ENCODE measurements at regions of chr3 and their contacts with region 1.

Region 1: GRCh38 chr3:73848173-73848906 is 223.6 kb upstream of the PDZRN3 start:
- DNase-seq: no peak
- ATAC-seq: peak in 3 of 4 donors; percentile 46 to 81 (median 62)
- H3K4me3 ChIP-seq: no peak overlapping the region
- H3K27ac ChIP-seq: no peak overlapping the region
- H3K4me1 ChIP-seq: no peaks in the 10 kb centered on the region
- H3K27me3 ChIP-seq: no peaks in the 10 kb centered on the region
- CTCF ChIP-seq: peak; percentile 79

Region 2: GRCh38 chr3:73459711-73460110 is 388.6 kb before region 1 on chr3:
- intact Hi-C with region 1: loop called in 1 of 2 experiments (anchors 5 kb)
- DNase-seq: no peak
- ATAC-seq: no peak
- H3K4me3 ChIP-seq: no peak overlapping the region
- H3K27ac ChIP-seq: no peak overlapping the region
- H3K4me1 ChIP-seq: peaks cover 8% of the 10 kb centered on the region
- H3K27me3 ChIP-seq: no peaks in the 10 kb centered on the region
- CTCF ChIP-seq: no peak

Region 3: DNA sequence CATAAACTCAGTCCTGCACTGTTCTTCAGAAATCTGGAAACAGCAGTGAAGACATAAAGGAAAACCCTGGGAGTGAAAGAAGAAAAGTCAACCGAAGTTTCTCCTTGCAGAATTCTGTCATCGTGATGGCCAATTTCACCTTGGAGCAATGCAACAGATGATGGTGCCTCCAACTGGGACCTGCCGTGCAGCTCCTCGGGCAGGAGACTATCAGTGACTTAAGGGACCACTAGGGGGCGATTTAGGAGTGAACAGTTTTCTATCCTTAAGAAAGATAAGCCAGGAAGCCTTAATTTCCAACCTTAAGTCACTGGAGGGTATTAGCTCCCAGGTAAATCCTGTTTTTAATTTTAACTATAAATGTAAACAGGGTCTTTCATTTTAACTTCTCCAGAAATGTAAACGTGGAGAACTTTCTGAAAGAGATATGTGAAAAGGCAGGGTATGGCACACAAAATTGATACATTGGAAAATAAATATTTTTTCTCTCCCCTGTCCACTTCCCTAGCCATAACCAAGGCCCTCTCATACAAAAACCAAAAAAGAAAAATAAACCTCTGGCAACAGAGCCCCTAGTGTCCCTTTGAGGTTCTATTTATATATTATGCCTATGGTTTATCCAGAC is 339.9 kb before region 1 on chr3:
- intact Hi-C with region 1: loop called (anchors 5 kb)
- DNase-seq: no peak
- ATAC-seq: peak; percentile 71 to 85 (median 80)
- H3K4me3 ChIP-seq: no peak overlapping the region
- H3K27ac ChIP-seq: peak overlapping the region; percentile 70
- H3K4me1 ChIP-seq: peaks cover 58% of the 10 kb centered on the region
- H3K27me3 ChIP-seq: no peaks in the 10 kb centered on the region
- CTCF ChIP-seq: peak; percentile 81

Region 4: GRCh38 chr3:73727117-73727821 is 121.1 kb before region 1 on chr3:
- intact Hi-C with region 1: loop called in 1 of 2 experiments (anchors 10 kb)
- DNase-seq: peak; percentile 46 to 50
- ATAC-seq: peak in 3 of 4 donors; percentile 51 to 68 (median 54)
- H3K4me3 ChIP-seq: no peak overlapping the region
- H3K27ac ChIP-seq: peak overlapping the region; percentile 60
- H3K4me1 ChIP-seq: peaks cover 36% of the 10 kb centered on the region
- H3K27me3 ChIP-seq: no peaks in the 10 kb centered on the region
- CTCF ChIP-seq: no peak

Region 5: GRCh38 chr3:73805435-73805834 is 42.9 kb before region 1 on chr3:
- intact Hi-C with region 1: no loop called
- DNase-seq: peak; percentile 54 to 83
- ATAC-seq: peak; percentile 89 to 97 (median 96)
- H3K4me3 ChIP-seq: no peak overlapping the region
- H3K27ac ChIP-seq: peak overlapping the region; percentile 60
- H3K4me1 ChIP-seq: peaks cover 9% of the 10 kb centered on the region
- H3K27me3 ChIP-seq: no peaks in the 10 kb centered on the region
- CTCF ChIP-seq: no peak

Measured in psoas muscle (tissue), 8 donors.